Colonic mucosa (tissue), 4 donors: ENCODE measurements at regions of chr12 and their contacts with region 1.

Region 1: GRCh38 chr12:6735448-6736191 is 11.8 kb downstream of the COPS7A start:
- DNase-seq: peak; percentile 70
- H3K4me3 ChIP-seq: no peak overlapping the region
- H3K27ac ChIP-seq: no peak overlapping the region
- H3K4me1 ChIP-seq: no peaks in the 10 kb centered on the region
- H3K27me3 ChIP-seq: no peaks in the 10 kb centered on the region
- CTCF ChIP-seq: peak; percentile 72

Region 2: GRCh38 chr12:6825398-6826124 is 89.9 kb after region 1 on chr12:
- intact Hi-C with region 1: loop called (anchors 5 kb)
- DNase-seq: peak; percentile 91
- H3K4me3 ChIP-seq: no peak overlapping the region
- H3K27ac ChIP-seq: no peak overlapping the region
- H3K4me1 ChIP-seq: no peaks in the 10 kb centered on the region
- H3K27me3 ChIP-seq: peaks cover 29% of the 10 kb centered on the region
- CTCF ChIP-seq: peak; percentile 93